Calu3 (cell line): ENCODE measurements at regions of chr22 and their contacts with region 1.

Region 1: DNA sequence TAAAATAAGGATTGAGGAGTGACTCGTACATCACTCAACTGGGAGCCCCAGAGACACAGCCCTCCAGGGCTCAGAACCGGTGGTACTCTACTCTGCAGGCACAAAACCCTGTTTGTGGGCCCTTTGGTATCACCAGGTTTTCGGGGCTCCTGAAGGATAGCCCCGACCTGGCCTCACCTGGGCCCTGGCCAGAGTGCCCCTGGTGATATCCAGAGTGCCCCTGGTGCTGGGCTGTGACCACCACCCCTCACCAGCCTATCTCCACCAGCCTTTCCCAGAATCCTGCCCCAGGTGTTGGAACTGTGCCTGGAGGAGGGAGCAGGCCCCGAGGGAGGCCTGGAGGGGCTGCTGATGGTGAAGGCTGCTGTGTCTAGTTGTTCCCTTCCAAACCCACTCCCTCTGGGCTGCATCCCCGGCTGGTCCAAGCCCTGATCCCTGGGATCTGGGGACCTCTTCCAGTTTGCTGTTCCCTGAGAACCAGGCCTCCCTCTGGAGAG is 2.2 kb upstream of the GGT5 start:
- DNase-seq: no peak
- H3K4me3 Mint-ChIP-seq: no peak overlapping the region
- H3K27ac Mint-ChIP-seq: no peak overlapping the region
- H3K4me1 Mint-ChIP-seq: peaks cover 21% of the 10 kb centered on the region
- H3K27me3 Mint-ChIP-seq: no peaks in the 10 kb centered on the region
- CTCF ChIP-seq: no peak

Region 2: GRCh38 chr22:23938328-23939016 is 308.6 kb before region 1 on chr22:
- CTCF ChIA-PET with region 1: no interaction called
- intact Hi-C with region 1: no loop called
- DNase-seq: no peak
- H3K4me3 Mint-ChIP-seq: no peak overlapping the region
- H3K27ac Mint-ChIP-seq: no peak overlapping the region
- H3K4me1 Mint-ChIP-seq: no peaks in the 10 kb centered on the region
- H3K27me3 Mint-ChIP-seq: no peaks in the 10 kb centered on the region
- CTCF ChIP-seq: no peak

Region 3: DNA sequence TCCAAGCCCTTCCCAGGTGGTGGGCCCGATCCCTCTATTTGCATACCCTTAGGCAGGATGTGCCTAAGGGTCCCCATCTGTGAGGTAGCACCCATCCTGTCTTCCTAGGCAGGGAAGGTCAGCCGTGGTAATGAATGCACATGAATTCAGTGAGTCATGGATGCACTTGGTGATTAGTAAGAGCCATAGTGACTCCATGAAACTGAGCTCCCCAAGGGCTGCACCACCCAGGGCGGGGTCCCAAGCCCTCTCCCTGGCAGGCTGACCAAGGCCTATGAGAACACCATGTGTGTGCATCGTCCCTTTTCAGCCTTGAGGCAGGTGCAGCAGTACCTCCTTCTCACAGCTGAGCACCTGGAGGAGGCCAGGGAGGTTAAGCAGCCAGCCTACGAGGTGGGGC is 81.4 kb before region 1 on chr22:
- CTCF ChIA-PET with region 1: no interaction called
- intact Hi-C with region 1: no loop called
- DNase-seq: no peak
- H3K4me3 Mint-ChIP-seq: no peak overlapping the region
- H3K27ac Mint-ChIP-seq: no peak overlapping the region
- H3K4me1 Mint-ChIP-seq: no peaks in the 10 kb centered on the region
- H3K27me3 Mint-ChIP-seq: no peaks in the 10 kb centered on the region
- CTCF ChIP-seq: no peak

Region 4: DNA sequence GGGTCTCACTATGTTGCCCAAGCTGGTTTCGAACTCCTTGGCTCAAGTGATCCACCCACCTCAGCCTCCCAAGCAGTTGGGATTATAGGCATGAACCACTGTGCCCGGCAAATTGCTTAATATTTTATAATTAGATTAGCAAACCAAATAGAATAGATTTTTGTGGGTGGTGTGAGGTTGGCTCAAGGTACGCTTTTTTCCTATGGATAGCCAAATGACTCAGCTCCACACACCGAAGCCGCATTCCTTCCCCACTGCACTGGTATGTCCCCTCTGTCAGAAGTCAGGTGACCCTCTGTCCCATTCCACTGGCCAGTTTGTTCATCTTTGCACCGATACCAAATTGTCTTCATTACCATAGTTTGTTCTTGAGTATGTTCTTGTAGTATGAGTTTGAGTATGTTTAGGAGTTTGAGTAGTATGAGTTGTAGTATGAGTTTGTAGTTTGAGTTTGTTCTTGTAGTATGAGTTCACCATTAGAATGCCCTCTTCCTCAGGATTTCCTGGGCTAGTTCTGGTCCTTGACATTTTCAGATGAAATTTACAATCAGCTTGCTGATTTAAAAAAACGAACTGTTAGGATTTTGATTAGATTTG is 46.3 kb before region 1 on chr22:
- CTCF ChIA-PET with region 1: interaction called, 6 read pairs
- intact Hi-C with region 1: loop called (anchors 5 kb)
- DNase-seq: peak; percentile 73
- H3K4me3 Mint-ChIP-seq: no peak overlapping the region
- H3K27ac Mint-ChIP-seq: peak overlapping the region; percentile 98
- H3K4me1 Mint-ChIP-seq: peaks cover 48% of the 10 kb centered on the region
- H3K27me3 Mint-ChIP-seq: no peaks in the 10 kb centered on the region
- CTCF ChIP-seq: no peak

Region 5: GRCh38 chr22:24284747-24285203 is 37.7 kb after region 1 on chr22:
- CTCF ChIA-PET with region 1: no interaction called
- intact Hi-C with region 1: no loop called
- DNase-seq: no peak
- H3K4me3 Mint-ChIP-seq: no peak overlapping the region
- H3K27ac Mint-ChIP-seq: no peak overlapping the region
- H3K4me1 Mint-ChIP-seq: peaks cover 48% of the 10 kb centered on the region
- H3K27me3 Mint-ChIP-seq: no peaks in the 10 kb centered on the region
- CTCF ChIP-seq: no peak